ENCODE measurements at regions of chr12 and their contacts with region 1.

Region 1: DNA sequence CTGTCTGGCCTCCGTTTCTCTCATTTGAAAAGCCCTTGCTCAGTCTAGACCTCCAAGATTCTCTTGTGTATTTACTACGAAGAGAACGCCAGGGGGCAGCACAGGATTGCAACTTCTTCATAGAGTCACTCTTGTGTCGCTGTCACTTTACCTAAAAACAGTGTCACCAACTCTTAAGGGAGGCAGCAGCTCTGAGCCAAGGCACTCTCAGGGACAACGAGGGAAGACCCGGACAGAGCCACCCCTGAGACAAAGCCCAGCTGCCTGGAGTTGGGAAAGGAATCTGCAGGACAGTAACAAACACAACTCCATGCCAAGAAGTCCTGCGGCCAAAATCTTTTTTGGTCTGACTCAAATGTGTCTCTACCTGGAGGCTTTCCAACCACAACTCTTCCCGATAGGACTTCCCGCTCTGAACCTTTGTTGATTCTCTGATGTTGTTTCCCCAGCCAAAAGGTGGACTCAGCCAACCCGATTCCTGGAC is 9.6 kb upstream of the RPAP3 start:
- DNase-seq: peak; percentile 90
- H3K4me3 Mint-ChIP-seq: no peak overlapping the region
- H3K27ac Mint-ChIP-seq: no peak overlapping the region
- H3K4me1 Mint-ChIP-seq: peaks cover 31% of the 10 kb centered on the region
- H3K27me3 Mint-ChIP-seq: no peaks in the 10 kb centered on the region

Region 2: GRCh38 chr12:47547085-47547484 is 168.3 kb before region 1 on chr12:
- CTCF ChIA-PET with region 1: no interaction called
- intact Hi-C with region 1: no loop called
- DNase-seq: no peak
- H3K4me3 Mint-ChIP-seq: no peak overlapping the region
- H3K27ac Mint-ChIP-seq: no peak overlapping the region
- H3K4me1 Mint-ChIP-seq: peaks cover 10% of the 10 kb centered on the region
- H3K27me3 Mint-ChIP-seq: no peaks in the 10 kb centered on the region

Region 3: GRCh38 chr12:47657565-47657964 is 57.9 kb before region 1 on chr12:
- CTCF ChIA-PET with region 1: no interaction called
- intact Hi-C with region 1: no loop called
- DNase-seq: no peak
- H3K4me3 Mint-ChIP-seq: no peak overlapping the region
- H3K27ac Mint-ChIP-seq: no peak overlapping the region
- H3K4me1 Mint-ChIP-seq: no peaks in the 10 kb centered on the region
- H3K27me3 Mint-ChIP-seq: no peaks in the 10 kb centered on the region

Region 4: GRCh38 chr12:47734725-47735480 is 19.5 kb after region 1 on chr12:
- CTCF ChIA-PET with region 1: interaction called, 121 read pairs
- intact Hi-C with region 1: loop called (anchors 2 kb)
- DNase-seq: no peak
- H3K4me3 Mint-ChIP-seq: no peak overlapping the region
- H3K27ac Mint-ChIP-seq: no peak overlapping the region
- H3K4me1 Mint-ChIP-seq: peaks cover 7% of the 10 kb centered on the region
- H3K27me3 Mint-ChIP-seq: no peaks in the 10 kb centered on the region

Region 5: GRCh38 chr12:47767216-47767724 is 51.8 kb after region 1 on chr12:
- CTCF ChIA-PET with region 1: interaction called, 74 read pairs
- intact Hi-C with region 1: loop called (anchors 1 kb)
- DNase-seq: peak; percentile 89
- H3K4me3 Mint-ChIP-seq: no peak overlapping the region
- H3K27ac Mint-ChIP-seq: no peak overlapping the region
- H3K4me1 Mint-ChIP-seq: no peaks in the 10 kb centered on the region
- H3K27me3 Mint-ChIP-seq: no peaks in the 10 kb centered on the region

Region 6: DNA sequence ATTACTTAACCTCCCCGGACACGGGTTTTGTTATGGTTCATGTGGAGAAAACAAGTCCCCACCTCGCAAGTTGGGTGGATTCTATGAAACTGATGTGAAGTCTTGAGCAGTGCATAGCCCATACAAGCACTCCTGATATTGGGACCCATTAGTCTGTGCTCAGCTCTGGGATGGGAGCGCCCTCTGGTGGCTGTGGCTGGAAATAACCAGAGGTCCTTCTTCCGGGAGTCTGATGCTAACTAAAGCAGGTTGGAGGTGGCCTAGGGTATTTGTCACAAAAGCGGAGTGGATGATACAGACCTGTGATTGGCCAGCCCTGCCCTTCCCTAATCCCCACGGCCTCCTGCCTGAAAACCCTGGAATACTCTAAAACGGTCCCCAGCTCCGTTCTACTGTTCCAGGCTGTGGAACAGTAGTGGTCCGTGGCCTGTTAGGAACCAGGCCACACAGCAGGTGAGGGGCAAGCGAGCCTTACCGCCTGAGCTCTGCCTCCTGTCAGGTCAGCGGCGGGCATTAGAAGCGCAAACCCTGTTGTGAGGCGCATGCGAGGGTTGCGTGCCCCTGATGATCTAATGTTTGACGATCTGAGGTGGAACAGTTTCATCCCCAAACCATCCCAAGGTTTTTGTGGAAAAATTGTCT is 64.0 kb after region 1 on chr12:
- CTCF ChIA-PET with region 1: interaction called, 70 read pairs
- intact Hi-C with region 1: loop called (anchors 1 kb)
- DNase-seq: peak; percentile 97
- H3K4me3 Mint-ChIP-seq: no peak overlapping the region
- H3K27ac Mint-ChIP-seq: peak overlapping the region; percentile 18
- H3K4me1 Mint-ChIP-seq: peaks cover 30% of the 10 kb centered on the region
- H3K27me3 Mint-ChIP-seq: no peaks in the 10 kb centered on the region

Region 7: DNA sequence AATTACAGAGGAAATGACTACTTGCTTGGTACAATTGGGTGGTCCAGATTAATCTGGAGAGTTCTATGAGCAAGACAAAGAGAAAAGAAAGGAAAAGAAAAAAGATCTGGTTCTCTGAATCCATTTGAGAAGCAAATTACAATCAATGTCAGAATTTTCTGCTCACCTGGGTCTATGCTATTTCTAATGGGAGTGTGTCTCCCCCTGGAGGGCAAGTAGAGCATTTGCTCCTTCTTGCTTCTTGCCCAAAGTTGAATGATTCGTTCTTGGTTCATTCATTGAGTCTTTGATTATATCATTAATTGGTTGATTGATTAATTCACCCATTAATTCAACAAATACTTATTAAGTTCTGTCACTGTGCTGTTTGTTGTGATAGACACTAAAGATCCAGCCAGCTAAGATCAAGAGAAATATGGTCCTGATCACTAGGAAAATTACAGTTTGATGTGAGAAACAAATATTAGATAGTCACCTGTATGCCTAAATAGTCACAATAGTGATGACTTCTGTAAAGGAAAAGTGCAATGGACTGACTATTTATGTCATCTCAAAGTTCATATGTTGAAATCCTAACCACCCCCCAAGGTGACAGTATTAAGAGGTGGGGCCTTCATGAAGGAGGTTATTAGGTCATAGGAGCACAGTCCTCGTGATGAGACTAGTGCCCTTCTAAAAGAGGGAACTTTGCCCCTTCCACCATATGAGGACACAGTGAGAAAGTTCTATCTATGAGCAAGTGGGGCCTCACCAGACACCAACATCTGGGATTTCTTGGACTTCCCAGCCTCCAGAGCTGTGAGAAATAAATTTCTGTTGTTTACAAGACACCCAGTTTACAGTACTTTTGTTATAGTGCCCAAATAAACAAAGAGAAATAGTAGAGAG is 449.9 kb after region 1 on chr12:
- CTCF ChIA-PET with region 1: no interaction called
- intact Hi-C with region 1: loop called (anchors 1 kb)
- DNase-seq: peak; percentile 72
- H3K4me3 Mint-ChIP-seq: no peak overlapping the region
- H3K27ac Mint-ChIP-seq: no peak overlapping the region
- H3K4me1 Mint-ChIP-seq: peaks cover 9% of the 10 kb centered on the region
- H3K27me3 Mint-ChIP-seq: no peaks in the 10 kb centered on the region

Region 8: DNA sequence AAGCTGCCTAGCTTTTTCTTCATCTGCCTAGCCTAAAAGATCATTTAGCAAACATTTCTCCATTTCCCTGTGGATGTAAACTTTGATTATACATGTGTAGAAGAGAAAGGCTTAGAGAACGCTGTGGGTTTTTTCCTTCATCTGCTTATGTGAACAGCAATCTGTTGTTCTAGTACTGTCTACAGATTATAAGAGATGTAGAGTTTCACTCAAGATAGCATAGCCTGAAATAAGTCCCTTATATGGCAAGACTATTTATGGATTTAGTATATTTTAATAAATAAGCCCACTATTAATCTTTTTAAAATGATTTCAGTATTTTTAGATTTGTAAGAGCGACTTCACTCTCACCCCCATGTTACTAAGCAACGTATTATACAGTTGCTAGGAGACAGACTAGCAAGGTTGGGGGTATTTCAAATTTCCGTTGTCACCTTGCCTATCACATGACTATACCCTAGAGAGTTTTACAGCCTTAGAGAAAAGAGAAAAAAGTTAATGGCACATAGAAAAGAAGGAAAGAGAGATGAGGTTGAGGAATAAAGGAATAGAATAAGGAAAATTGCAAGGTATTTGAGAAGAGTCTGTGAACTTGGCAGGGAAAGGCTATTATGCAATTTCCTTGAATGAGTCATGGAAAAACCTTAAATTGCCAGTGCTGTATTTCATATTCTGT is 1485.6 kb after region 1 on chr12:
- CTCF ChIA-PET with region 1: no interaction called
- intact Hi-C with region 1: no loop called
- DNase-seq: no peak
- H3K4me3 Mint-ChIP-seq: peak overlapping the region; percentile 20
- H3K27ac Mint-ChIP-seq: no peak overlapping the region
- H3K4me1 Mint-ChIP-seq: peaks cover 11% of the 10 kb centered on the region
- H3K27me3 Mint-ChIP-seq: no peaks in the 10 kb centered on the region

Measured in activated naive CD4-positive, alpha-beta T cell treated with anti-CD3 and anti-CD28 coated beads for 36 hours (primary cell).